AG04449 (cell line): ENCODE measurements at regions of chr2 and their contacts with region 1.

Region 1: DNA sequence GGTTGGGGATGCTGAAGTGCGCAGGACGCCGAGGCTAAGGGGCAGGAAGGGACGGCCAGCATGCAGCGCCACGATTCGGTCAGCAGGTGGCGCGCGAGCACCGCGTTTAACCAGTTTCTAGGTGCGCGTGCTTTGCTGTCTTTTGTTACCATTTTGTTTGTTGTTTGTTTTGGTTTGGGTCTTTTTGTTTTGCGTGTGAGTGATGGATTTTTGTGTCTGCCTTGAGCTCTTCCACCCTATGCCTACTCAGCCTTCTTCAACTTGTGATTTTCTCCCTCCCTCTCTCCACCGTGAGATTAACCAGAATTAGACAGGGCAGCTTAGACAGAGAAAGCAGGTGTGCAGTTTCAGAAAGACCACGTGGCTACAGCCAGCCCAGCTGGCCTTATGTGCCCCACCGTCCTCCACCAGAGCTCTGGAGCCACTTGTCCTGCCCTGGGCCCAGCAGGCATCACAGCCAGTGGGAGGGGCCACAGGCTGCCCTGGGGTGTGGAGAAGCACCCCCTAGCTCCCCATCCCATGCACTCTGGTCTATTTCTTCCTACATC is 180.2 kb downstream of the RNF144A start:
- DNase-seq: no peak
- H3K4me3 ChIP-seq: peak overlapping the region; percentile 30
- CTCF ChIP-seq: peak; percentile 99

Region 2: GRCh38 chr2:7083577-7084509 is 13.6 kb before region 1 on chr2:
- CTCF ChIA-PET with region 1: interaction called, 21 read pairs
- POLR2A ChIA-PET with region 1: no interaction called
- DNase-seq: no peak
- H3K4me3 ChIP-seq: no peak overlapping the region
- CTCF ChIP-seq: peak; percentile 54

Region 3: GRCh38 chr2:7111626-7112025 is 14.2 kb after region 1 on chr2:
- CTCF ChIA-PET with region 1: interaction called, 42 read pairs
- POLR2A ChIA-PET with region 1: no interaction called
- DNase-seq: no peak
- H3K4me3 ChIP-seq: no peak overlapping the region
- CTCF ChIP-seq: peak; percentile 8

Region 4: DNA sequence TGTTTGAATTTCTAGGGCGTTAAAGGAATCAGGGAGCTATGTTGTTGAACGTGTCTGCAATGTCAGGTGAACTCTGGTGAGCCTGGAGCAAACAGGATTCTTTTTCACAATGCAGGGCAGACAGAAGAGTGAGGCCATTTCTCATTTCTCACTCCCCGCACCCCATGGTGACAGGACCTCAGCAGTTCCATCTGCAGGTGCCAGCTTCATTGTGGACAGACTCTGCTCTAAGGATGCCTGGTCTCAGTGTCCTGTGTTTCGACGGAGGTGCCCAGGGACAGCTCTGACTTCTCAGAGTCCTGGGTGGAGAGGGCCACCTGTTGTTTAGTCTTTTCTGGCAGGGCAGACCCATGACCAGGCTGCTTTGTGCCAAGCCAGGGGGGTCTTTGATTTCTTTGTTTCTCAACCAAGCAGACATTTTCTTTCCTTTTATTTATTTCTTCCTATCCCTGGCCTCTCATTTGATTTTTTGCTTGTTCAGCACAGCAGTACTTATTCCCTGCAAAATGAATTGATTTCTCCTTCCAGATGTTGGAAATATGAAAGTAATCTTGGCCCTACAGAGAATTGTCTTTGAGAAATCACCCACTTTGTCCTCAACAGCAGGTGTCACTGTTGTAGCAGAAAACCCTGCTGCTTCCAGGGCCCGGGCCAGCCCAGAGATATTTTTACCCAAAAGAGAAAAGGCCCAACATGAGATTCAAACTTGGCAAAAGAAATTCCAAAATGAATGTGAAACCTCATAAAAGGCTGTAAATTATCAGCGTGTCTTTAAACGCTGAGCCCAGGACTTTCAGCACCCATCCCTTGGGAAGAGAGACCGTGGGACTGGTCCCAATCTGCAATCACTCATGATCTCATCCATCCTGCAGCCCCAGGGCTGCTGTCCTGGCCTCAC is 21.4 kb after region 1 on chr2:
- CTCF ChIA-PET with region 1: interaction called, 30 read pairs
- POLR2A ChIA-PET with region 1: no interaction called
- DNase-seq: no peak
- H3K4me3 ChIP-seq: no peak overlapping the region
- CTCF ChIP-seq: peak; percentile 60

Region 5: DNA sequence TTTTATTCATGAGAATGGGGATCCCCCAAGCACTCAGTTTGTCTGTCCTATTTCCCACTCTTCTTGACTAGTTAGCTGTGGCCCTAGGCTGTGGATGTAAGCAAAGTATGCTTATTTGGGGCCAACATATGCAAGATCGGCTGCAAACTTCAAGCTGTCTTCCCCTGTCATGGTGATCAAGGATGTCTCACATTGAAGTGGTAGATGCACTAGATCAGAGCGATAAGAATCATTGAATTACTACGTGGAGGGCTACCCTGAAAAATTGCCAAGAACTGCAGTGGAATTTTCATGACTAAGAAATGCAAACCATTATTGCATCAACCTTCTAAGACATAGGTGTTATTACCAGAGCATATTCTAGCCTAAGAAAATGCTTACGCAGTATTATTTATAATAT is 347.2 kb after region 1 on chr2:
- CTCF ChIA-PET with region 1: no interaction called
- POLR2A ChIA-PET with region 1: no interaction called
- DNase-seq: no peak
- H3K4me3 ChIP-seq: no peak overlapping the region
- CTCF ChIP-seq: no peak

Region 6: GRCh38 chr2:7588295-7588694 is 490.9 kb after region 1 on chr2:
- CTCF ChIA-PET with region 1: no interaction called
- POLR2A ChIA-PET with region 1: no interaction called
- DNase-seq: no peak
- H3K4me3 ChIP-seq: no peak overlapping the region
- CTCF ChIP-seq: no peak